Mammary epithelial cell (primary cell): ENCODE measurements at regions of chr1 and their contacts with region 1.

Region 1: GRCh38 chr1:206544562-206545257 is 37.4 kb downstream of the RASSF5 start:
- DNase-seq: peak; percentile 31
- H3K4me3 ChIP-seq: no peak overlapping the region
- H3K27ac ChIP-seq: no peak overlapping the region
- H3K4me1 ChIP-seq: no peaks in the 10 kb centered on the region
- H3K27me3 ChIP-seq: no peaks in the 10 kb centered on the region
- CTCF ChIP-seq: peak; percentile 84 to 89

Region 2: GRCh38 chr1:206521143-206521542 is 23.6 kb before region 1 on chr1:
- CTCF ChIA-PET with region 1: no interaction called
- dilution Hi-C with region 1: no loop called
- in situ Hi-C with region 1: no loop called
- intact Hi-C with region 1: no loop called
- DNase-seq: no peak
- H3K4me3 ChIP-seq: no peak overlapping the region
- H3K27ac ChIP-seq: no peak overlapping the region
- H3K4me1 ChIP-seq: peaks cover 12% of the 10 kb centered on the region
- H3K27me3 ChIP-seq: no peaks in the 10 kb centered on the region
- CTCF ChIP-seq: no peak

Region 3: GRCh38 chr1:206556750-206557635 is 12.3 kb after region 1 on chr1:
- CTCF ChIA-PET with region 1: interaction called, 20 read pairs
- dilution Hi-C with region 1: no loop called
- in situ Hi-C with region 1: no loop called
- intact Hi-C with region 1: no loop called
- DNase-seq: peak; percentile 36
- H3K4me3 ChIP-seq: peak overlapping the region; percentile 27 to 49 (median 46)
- H3K27ac ChIP-seq: no peak overlapping the region
- H3K4me1 ChIP-seq: peaks cover 14% of the 10 kb centered on the region
- H3K27me3 ChIP-seq: no peaks in the 10 kb centered on the region
- CTCF ChIP-seq: no peak

Region 4: GRCh38 chr1:206663832-206664652 is 119.3 kb after region 1 on chr1:
- CTCF ChIA-PET with region 1: no interaction called
- dilution Hi-C with region 1: no loop called
- in situ Hi-C with region 1: no loop called
- intact Hi-C with region 1: loop called (anchors 2 kb)
- DNase-seq: peak; percentile 36
- H3K4me3 ChIP-seq: no peak overlapping the region
- H3K27ac ChIP-seq: no peak overlapping the region
- H3K4me1 ChIP-seq: peaks cover 5% of the 10 kb centered on the region
- H3K27me3 ChIP-seq: no peaks in the 10 kb centered on the region
- CTCF ChIP-seq: peak; percentile 79 to 85

Region 5: GRCh38 chr1:206761159-206761768 is 216.6 kb after region 1 on chr1:
- CTCF ChIA-PET with region 1: no interaction called
- dilution Hi-C with region 1: no loop called
- in situ Hi-C with region 1: no loop called
- intact Hi-C with region 1: no loop called
- DNase-seq: no peak
- H3K4me3 ChIP-seq: no peak overlapping the region
- H3K27ac ChIP-seq: no peak overlapping the region
- H3K4me1 ChIP-seq: no peaks in the 10 kb centered on the region
- H3K27me3 ChIP-seq: no peaks in the 10 kb centered on the region
- CTCF ChIP-seq: peak; percentile 10 to 16